ENCODE measurements at regions of chr5 and their contacts with region 1.

Region 1: DNA sequence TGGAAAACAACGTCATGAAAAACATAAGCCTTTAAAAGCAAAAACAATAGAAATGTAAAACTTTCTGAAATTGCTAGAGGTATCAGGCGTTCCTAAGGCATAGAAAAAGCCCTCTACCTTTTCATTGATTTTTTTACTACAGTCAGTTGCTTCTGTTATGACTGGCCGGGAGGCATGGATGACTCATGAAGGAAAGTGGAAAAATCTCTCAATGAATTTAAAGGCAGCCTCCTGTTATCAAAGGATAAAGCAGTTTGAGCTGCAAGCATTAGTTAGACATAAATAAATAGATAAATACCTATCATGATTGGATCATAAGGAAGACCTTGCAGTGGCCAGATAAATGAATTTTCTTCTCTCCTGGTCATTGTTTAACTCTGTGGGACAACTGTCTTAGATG is 281.6 kb downstream of the MAST4 start:
- DNase-seq: peak; percentile 52
- H3K4me3 Mint-ChIP-seq: no peak overlapping the region
- H3K27ac Mint-ChIP-seq: peak overlapping the region; percentile 14
- H3K4me1 Mint-ChIP-seq: peaks cover 74% of the 10 kb centered on the region
- H3K27me3 Mint-ChIP-seq: no peaks in the 10 kb centered on the region
- CTCF ChIP-seq: no peak

Region 2: DNA sequence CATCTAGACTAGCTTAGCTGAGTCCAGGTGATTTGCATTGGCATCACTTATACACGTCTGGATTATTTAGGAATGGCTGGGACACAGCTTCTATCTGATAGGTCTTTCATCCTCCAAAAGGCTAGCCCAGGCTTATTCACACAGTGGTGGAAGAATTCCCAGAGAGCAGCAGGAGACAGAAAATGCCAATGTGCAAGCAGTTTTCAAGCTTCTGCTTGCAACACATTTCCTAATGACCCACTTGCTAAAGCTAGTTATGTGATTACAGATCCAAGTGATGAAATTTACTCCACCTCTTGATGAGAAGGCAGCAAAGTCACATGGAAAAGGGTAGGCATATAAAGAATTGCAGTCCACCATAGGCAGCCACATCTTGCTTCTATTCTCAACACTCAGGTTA is 325.9 kb before region 1 on chr5:
- CTCF ChIA-PET with region 1: no interaction called
- intact Hi-C with region 1: no loop called
- DNase-seq: no peak
- H3K4me3 Mint-ChIP-seq: no peak overlapping the region
- H3K27ac Mint-ChIP-seq: no peak overlapping the region
- H3K4me1 Mint-ChIP-seq: no peaks in the 10 kb centered on the region
- H3K27me3 Mint-ChIP-seq: peaks cover 36% of the 10 kb centered on the region
- CTCF ChIP-seq: no peak

Region 3: DNA sequence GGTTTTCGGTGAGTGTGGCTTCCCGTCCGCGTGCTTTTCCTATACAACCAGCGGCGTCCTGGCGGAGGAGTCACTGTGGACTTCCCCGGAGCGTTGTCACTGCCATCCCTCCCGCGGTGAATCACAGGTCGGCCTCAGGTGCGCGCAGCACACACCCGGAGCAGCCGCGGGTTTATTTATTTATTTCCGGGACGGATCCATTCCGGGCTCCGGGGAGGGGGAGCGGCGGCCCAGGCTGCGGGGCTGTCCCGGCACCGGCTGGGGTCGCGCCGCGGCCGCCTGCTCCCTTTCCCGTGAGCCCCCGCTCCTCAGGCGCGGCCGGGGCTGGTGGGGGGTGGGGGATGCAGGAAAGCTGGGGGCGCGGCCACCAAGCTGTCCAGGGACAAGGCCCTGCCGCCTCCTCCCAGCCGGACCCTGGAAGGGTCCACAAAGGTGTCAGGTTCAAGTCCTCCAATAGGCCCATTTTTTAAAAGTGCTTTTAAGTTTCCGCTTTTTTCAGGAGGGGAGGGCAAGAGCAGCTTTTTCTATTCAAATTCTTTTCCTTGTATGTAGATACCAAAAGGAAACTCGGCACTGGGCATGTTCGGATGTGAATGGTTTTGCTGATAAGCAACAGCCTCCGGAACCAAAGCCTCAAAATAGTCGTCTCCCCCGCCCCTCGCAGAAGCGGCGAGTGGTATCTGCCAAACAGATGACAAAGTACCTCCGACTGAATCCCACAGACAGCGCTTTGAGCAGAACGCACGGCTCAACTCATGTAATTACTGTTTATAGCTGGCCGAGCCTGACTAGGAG is 126.3 kb after region 1 on chr5:
- CTCF ChIA-PET with region 1: no interaction called
- intact Hi-C with region 1: loop called (anchors 5 kb)
- DNase-seq: peak; percentile 93
- H3K4me3 Mint-ChIP-seq: peak overlapping the region; percentile 89
- H3K27ac Mint-ChIP-seq: peak overlapping the region; percentile 93
- H3K4me1 Mint-ChIP-seq: no peaks in the 10 kb centered on the region
- H3K27me3 Mint-ChIP-seq: no peaks in the 10 kb centered on the region
- CTCF ChIP-seq: no peak